ENCODE measurements at regions of chr4 and their contacts with region 1.

Region 1: DNA sequence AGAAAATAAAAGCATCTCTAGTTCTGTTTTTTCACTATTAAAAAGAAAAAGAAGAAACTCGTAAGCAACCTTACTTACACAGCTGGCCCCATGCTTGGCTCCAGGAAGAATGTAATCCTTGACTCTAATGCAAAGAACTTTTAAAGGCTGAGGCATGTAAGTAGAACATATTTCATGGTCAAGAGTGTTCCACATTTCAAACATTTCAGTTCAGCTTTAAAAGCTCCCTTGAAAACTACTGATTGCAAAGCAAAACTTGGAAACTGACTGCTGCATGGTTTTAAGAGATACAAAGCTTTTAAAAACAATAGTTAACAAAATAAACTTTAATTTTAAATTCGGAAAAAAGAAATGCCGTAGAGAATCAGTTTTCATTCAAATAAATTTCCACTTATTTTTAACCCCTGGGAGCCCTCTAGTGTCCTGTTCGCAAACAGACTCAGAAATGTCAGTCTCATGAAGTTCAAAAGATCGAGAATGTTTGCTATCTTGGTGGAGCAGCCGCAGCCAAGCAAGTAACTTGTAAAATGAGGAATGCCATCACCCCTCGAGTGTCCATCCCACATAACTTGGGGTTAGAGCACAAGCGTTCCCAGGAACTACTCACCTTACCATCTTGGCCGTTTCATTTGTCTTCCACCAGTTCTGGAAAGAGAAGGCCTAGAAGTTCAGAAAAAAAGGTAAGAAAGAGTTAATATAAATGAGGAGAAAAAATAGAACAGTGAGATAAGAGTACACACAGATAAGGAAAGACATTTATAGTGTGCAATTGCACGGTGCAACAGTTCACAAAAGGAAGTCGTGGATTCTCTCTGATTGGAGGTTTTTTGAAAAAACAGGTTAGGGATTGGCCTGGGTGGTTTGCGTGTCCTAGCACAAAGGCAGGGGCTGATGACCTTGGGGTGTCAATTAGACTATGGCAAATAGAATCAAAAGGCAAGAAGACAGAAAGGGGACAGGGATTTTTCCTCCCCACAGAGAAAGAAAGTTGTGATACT is at the start of gene GASK1B:
- DNase-seq: peak; percentile 17
- H3K4me3 Mint-ChIP-seq: no peak within 1 kb of the TSS
- H3K27ac Mint-ChIP-seq: no peak within 1 kb of the TSS
- H3K4me1 Mint-ChIP-seq: peaks cover 8% of the 10 kb centered on the region
- H3K27me3 Mint-ChIP-seq: peaks cover 17% of the 10 kb centered on the region
- total RNA-seq, gene GASK1B: not detected

Region 2: GRCh38 chr4:157992038-157992705 is 180.4 kb before region 1 on chr4:
- CTCF ChIA-PET with region 1: interaction called, 7 read pairs
- POLR2A ChIA-PET with region 1: no interaction called
- intact Hi-C with region 1: loop called (anchors 1 kb)
- DNase-seq: no peak
- H3K4me3 Mint-ChIP-seq: no peak overlapping the region
- H3K27ac Mint-ChIP-seq: no peak overlapping the region
- H3K4me1 Mint-ChIP-seq: no peaks in the 10 kb centered on the region
- H3K27me3 Mint-ChIP-seq: no peaks in the 10 kb centered on the region

Region 3: DNA sequence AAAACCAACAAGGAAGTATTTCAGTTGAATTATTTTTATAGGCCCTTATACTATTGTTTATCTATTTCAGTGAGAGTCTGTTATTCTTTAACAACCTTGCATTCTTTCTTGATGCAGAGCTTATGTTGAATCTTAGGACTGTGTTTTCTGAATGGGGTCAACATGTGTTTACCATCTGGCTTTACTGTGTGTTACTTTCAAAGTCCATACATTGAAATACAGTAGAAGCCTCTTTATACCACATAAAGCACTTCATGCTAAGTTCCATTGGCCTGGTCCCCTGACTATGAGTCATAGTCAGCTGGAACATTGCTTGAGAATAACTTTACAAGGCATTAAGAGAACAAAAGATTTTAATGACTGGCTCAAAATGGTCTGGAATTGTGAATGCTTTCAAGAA is 152.4 kb before region 1 on chr4:
- CTCF ChIA-PET with region 1: no interaction called
- POLR2A ChIA-PET with region 1: no interaction called
- intact Hi-C with region 1: no loop called
- DNase-seq: no peak
- H3K4me3 Mint-ChIP-seq: no peak overlapping the region
- H3K27ac Mint-ChIP-seq: no peak overlapping the region
- H3K4me1 Mint-ChIP-seq: no peaks in the 10 kb centered on the region
- H3K27me3 Mint-ChIP-seq: peaks cover 1% of the 10 kb centered on the region

Region 4: DNA sequence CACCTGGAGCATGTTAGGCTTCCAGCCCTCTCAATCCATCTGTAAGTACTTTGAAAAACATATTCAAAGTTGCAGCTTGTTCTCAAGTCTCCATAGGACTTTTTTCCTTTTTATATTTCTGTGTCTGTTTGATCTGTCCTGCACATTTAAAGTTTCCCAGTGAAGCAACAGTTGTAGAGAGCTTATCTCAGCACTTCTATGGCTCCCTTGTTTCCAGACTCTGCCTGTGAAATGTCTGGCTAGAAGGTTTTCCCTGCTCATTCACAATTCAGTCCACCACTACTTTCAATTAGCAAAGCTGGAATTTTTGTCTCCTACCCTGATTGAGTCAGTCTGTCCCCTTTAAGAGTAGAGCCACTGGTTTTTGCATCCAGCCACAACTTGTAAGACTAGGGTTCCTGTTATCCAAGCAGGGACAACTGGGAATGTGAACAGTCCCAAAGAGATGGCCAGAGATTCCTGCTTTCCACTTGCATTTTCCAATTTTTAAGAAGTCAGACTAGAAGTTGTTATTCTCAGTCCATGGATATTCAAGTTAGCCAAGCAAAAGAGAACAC is 115.8 kb before region 1 on chr4:
- CTCF ChIA-PET with region 1: no interaction called
- POLR2A ChIA-PET with region 1: no interaction called
- intact Hi-C with region 1: no loop called
- DNase-seq: no peak
- H3K4me3 Mint-ChIP-seq: no peak overlapping the region
- H3K27ac Mint-ChIP-seq: no peak overlapping the region
- H3K4me1 Mint-ChIP-seq: no peaks in the 10 kb centered on the region
- H3K27me3 Mint-ChIP-seq: no peaks in the 10 kb centered on the region